GM12878 (cell line): ENCODE measurements at regions of chr5 and their contacts with region 1.

Region 1: GRCh38 chr5:87081511-87082372 is 185.9 kb upstream of the RASA1 start:
- DNase-seq: peak; percentile 80
- ATAC-seq: peak; percentile 94
- H3K4me3 ChIP-seq: peak overlapping the region; percentile 13; the same call in 1 of the 2 replicates
- H3K27ac ChIP-seq: peak overlapping the region; percentile 90
- H3K4me1 ChIP-seq: peaks cover 15% of the 10 kb centered on the region
- H3K27me3 ChIP-seq: no peaks in the 10 kb centered on the region
- CTCF ChIP-seq: no peak
- EP300 ChIP-seq: peak; percentile 87 to 91
- POLR2A ChIP-seq: no peak
- RAD21 ChIP-seq: peak; percentile 36; the same call in 1 of the 2 replicates

Region 2: GRCh38 chr5:87103596-87104287 is 22.0 kb after region 1 on chr5:
- CTCF ChIA-PET with region 1: interaction called, 3 read pairs
- POLR2A ChIA-PET with region 1: interaction called, 5 read pairs
- RAD21 ChIA-PET with region 1: interaction called, 10 read pairs
- SMC1A ChIA-PET with region 1: interaction called, 6 read pairs
- in situ Hi-C with region 1: no loop called
- intact Hi-C with region 1: no loop called
- DNase-seq: no peak
- ATAC-seq: peak; percentile 96
- H3K4me3 ChIP-seq: no peak overlapping the region
- H3K27ac ChIP-seq: peak overlapping the region; percentile 66
- H3K4me1 ChIP-seq: peaks cover 19% of the 10 kb centered on the region
- H3K27me3 ChIP-seq: no peaks in the 10 kb centered on the region
- CTCF ChIP-seq: no peak
- EP300 ChIP-seq: no peak
- POLR2A ChIP-seq: no peak
- RAD21 ChIP-seq: no peak